ENCODE measurements at regions of chr15 and their contacts with region 1.

Region 1: GRCh38 chr15:89740137-89740536 is 10.9 kb downstream of the MESP1 start:
- DNase-seq: peak in 7 of 9 donors; percentile 51 to 75 (median 64)
- ATAC-seq: peak; percentile 90
- H3K4me3 ChIP-seq: no peak overlapping the region
- H3K4me3 Mint-ChIP-seq: peak overlapping the region in 1 of 10 donors; percentile 25
- H3K27ac ChIP-seq: no peak overlapping the region
- H3K27ac Mint-ChIP-seq: no peak overlapping the region
- H3K4me1 ChIP-seq: no peaks in the 10 kb centered on the region
- H3K4me1 Mint-ChIP-seq: peaks cover 0 to 4% (median 1%) of the 10 kb centered on the region in 7 donors
- H3K27me3 ChIP-seq: no peaks in the 10 kb centered on the region
- H3K27me3 Mint-ChIP-seq: peaks cover 0 to 24% (median 9%) of the 10 kb centered on the region in 5 donors

Region 2: GRCh38 chr15:89794627-89795241 is 54.6 kb after region 1 on chr15:
- CTCF ChIA-PET with region 1: no interaction called
- POLR2A ChIA-PET with region 1: no interaction called
- intact Hi-C with region 1: no loop called
- DNase-seq: no peak
- ATAC-seq: no peak
- H3K4me3 ChIP-seq: no peak overlapping the region
- H3K4me3 Mint-ChIP-seq: no peak overlapping the region
- H3K27ac ChIP-seq: no peak overlapping the region
- H3K27ac Mint-ChIP-seq: no peak overlapping the region
- H3K4me1 ChIP-seq: no peaks in the 10 kb centered on the region
- H3K4me1 Mint-ChIP-seq: peaks cover 0 to 2% (median 0%) of the 10 kb centered on the region in 7 donors
- H3K27me3 ChIP-seq: no peaks in the 10 kb centered on the region
- H3K27me3 Mint-ChIP-seq: peaks cover 0 to 9% (median 0%) of the 10 kb centered on the region in 5 donors

Region 3: DNA sequence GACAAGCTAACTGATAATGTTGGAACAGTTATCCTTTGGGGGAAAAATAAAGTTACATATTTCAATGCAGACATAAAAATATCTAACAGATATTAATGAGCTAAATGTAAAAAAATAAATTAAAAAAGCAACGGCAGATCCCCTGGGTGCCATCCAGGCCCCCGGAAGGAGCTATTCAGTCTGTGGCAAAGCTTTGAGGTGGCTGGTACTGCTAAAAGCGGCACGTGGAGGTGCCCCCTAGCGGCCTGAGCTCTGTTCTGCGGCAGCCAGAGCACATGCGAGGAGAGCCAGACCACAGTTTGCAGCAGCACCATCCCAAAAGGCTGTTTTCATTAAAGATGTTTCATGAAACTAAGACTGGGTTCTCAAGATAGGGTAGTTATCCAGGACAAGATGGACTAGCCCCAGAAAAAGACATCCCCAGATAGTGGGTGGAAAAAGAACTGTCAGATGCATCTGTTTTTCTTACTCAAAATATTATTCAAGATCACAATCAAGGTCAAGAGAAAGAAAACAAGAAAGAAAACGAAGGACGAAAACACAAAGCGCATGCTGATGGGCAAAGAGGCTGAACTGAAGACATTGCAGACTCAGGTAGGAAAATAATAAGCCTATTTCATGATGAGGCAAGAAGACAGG is 134.9 kb after region 1 on chr15:
- CTCF ChIA-PET with region 1: interaction called, 17 read pairs
- POLR2A ChIA-PET with region 1: interaction called, 5 read pairs
- intact Hi-C with region 1: loop called (anchors 1 kb)
- DNase-seq: peak; percentile 58 to 80 (median 74)
- ATAC-seq: peak; percentile 99
- H3K4me3 ChIP-seq: no peak overlapping the region
- H3K4me3 Mint-ChIP-seq: peak overlapping the region in 1 of 10 donors; percentile 21
- H3K27ac ChIP-seq: no peak overlapping the region
- H3K27ac Mint-ChIP-seq: peak overlapping the region in 4 of 9 donors; percentile 34 to 77 (median 48)
- H3K4me1 ChIP-seq: no peaks in the 10 kb centered on the region
- H3K4me1 Mint-ChIP-seq: peaks cover 0 to 7% (median 5%) of the 10 kb centered on the region in 7 donors
- H3K27me3 ChIP-seq: no peaks in the 10 kb centered on the region
- H3K27me3 Mint-ChIP-seq: no peaks in the 10 kb centered on the region

Region 4: DNA sequence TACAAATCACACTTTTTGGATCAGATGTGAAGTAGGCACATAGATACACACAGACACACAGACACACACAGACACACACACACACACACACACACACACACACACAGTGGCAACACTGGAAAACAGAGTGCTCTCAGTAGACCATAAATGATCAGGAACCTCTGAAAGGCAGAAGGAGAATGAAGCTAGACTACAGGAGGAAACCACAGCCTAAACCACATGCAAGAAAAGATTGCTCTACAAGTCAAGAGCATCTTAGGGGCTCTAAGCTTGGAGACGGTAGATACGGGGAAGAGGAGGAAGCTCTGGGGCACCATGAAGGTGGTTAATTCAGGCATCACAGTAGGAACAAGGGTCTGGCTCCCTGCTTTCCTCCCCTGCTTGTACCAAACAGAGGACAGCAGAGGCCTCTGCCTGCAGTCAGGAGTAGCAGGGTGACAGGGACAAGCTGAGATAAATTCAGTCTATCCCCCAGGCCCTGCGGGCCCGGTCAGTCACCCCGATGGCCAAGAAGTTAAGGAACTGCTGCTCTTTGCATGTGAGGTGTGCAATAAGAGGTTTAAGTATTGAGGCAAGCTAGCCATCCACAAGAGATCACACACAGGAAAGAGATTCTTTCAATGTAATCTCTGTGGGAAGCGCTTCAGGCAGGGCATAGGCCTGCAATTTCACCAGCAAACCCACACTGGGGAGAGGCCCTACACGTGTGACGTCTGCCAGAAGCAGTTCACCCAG is 196.1 kb after region 1 on chr15:
- CTCF ChIA-PET with region 1: no interaction called
- POLR2A ChIA-PET with region 1: no interaction called
- intact Hi-C with region 1: no loop called
- DNase-seq: peak in 8 of 9 donors; percentile 22 to 60 (median 47)
- ATAC-seq: peak; percentile 80
- H3K4me3 ChIP-seq: no peak overlapping the region
- H3K4me3 Mint-ChIP-seq: peak overlapping the region in 9 of 10 donors; percentile 2 to 51 (median 28)
- H3K27ac ChIP-seq: no peak overlapping the region
- H3K27ac Mint-ChIP-seq: peak overlapping the region in 5 of 9 donors; percentile 0 to 29 (median 13)
- H3K4me1 ChIP-seq: peaks cover 6 to 11% of the 10 kb centered on the region in 2 donors
- H3K4me1 Mint-ChIP-seq: peaks cover 14 to 29% (median 17%) of the 10 kb centered on the region in 7 donors
- H3K27me3 ChIP-seq: no peaks in the 10 kb centered on the region
- H3K27me3 Mint-ChIP-seq: peaks cover 0 to 31% (median 0%) of the 10 kb centered on the region in 5 donors

Region 5: GRCh38 chr15:90086868-90087268 is 346.7 kb after region 1 on chr15:
- CTCF ChIA-PET with region 1: interaction called, 4 read pairs
- POLR2A ChIA-PET with region 1: no interaction called
- intact Hi-C with region 1: loop called (anchors 1 to 2 kb)
- DNase-seq: peak in 8 of 9 donors; percentile 17 to 57 (median 43)
- ATAC-seq: peak; percentile 83
- H3K4me3 ChIP-seq: no peak overlapping the region
- H3K4me3 Mint-ChIP-seq: no peak overlapping the region
- H3K27ac ChIP-seq: no peak overlapping the region
- H3K27ac Mint-ChIP-seq: peak overlapping the region; percentile 23 to 91 (median 72)
- H3K4me1 ChIP-seq: no peaks in the 10 kb centered on the region
- H3K4me1 Mint-ChIP-seq: peaks cover 0 to 21% (median 10%) of the 10 kb centered on the region in 7 donors
- H3K27me3 ChIP-seq: no peaks in the 10 kb centered on the region
- H3K27me3 Mint-ChIP-seq: no peaks in the 10 kb centered on the region

Region 6: DNA sequence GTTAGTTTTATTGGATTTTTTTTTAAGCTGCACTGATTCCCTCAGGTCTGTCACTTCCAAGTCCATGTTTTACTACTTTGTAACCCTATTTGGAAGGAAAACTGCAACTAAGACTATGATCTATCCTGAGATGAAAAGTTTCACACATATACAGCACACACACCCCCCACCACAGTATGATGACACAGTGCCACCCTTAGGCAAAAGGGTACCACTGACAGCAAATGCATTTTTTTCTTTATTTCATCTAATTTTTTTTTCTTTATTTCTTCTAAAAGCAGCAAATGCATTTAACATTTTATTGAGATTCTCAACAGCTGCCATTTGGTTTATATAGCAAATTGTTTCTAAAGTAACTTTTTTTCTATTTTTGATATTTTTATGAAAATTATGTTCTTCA is 546.5 kb after region 1 on chr15:
- CTCF ChIA-PET with region 1: interaction called, 7 read pairs
- POLR2A ChIA-PET with region 1: no interaction called
- intact Hi-C with region 1: loop called in 1 of 2 experiments (anchors 1 kb)
- DNase-seq: peak in 7 of 9 donors; percentile 39 to 68 (median 61)
- ATAC-seq: peak; percentile 88
- H3K4me3 ChIP-seq: no peak overlapping the region
- H3K4me3 Mint-ChIP-seq: no peak overlapping the region
- H3K27ac ChIP-seq: no peak overlapping the region
- H3K27ac Mint-ChIP-seq: no peak overlapping the region
- H3K4me1 ChIP-seq: no peaks in the 10 kb centered on the region
- H3K4me1 Mint-ChIP-seq: peaks cover 0 to 5% (median 0%) of the 10 kb centered on the region in 7 donors
- H3K27me3 ChIP-seq: no peaks in the 10 kb centered on the region
- H3K27me3 Mint-ChIP-seq: peaks cover 0 to 10% (median 0%) of the 10 kb centered on the region in 5 donors

Measured in naive thymus-derived CD4-positive, alpha-beta T cell (primary cell).